Activated CD8-positive, alpha-beta T cell treated with anti-CD3 and anti-CD28 coated beads for 36 hours (primary cell): ENCODE measurements at regions of chr6 and their contacts with region 1.

Region 1: GRCh38 chr6:24666641-24667377 is at the starts of genes ACOT13 and TDP2:
- DNase-seq: peak; percentile 96
- ATAC-seq: peak; percentile 95
- H3K4me3 Mint-ChIP-seq: peak within 1 kb of the TSS; percentile 91
- H3K27ac Mint-ChIP-seq: peak within 1 kb of the TSS; percentile 99
- H3K4me1 Mint-ChIP-seq: peaks cover 33% of the 10 kb centered on the region
- H3K27me3 Mint-ChIP-seq: no peaks in the 10 kb centered on the region
- CTCF ChIP-seq: peak; percentile 70
- total RNA-seq, gene ACOT13: 28.9 to 33.6 TPM
- total RNA-seq, gene TDP2: 37.4 to 39.8 TPM

Region 2: DNA sequence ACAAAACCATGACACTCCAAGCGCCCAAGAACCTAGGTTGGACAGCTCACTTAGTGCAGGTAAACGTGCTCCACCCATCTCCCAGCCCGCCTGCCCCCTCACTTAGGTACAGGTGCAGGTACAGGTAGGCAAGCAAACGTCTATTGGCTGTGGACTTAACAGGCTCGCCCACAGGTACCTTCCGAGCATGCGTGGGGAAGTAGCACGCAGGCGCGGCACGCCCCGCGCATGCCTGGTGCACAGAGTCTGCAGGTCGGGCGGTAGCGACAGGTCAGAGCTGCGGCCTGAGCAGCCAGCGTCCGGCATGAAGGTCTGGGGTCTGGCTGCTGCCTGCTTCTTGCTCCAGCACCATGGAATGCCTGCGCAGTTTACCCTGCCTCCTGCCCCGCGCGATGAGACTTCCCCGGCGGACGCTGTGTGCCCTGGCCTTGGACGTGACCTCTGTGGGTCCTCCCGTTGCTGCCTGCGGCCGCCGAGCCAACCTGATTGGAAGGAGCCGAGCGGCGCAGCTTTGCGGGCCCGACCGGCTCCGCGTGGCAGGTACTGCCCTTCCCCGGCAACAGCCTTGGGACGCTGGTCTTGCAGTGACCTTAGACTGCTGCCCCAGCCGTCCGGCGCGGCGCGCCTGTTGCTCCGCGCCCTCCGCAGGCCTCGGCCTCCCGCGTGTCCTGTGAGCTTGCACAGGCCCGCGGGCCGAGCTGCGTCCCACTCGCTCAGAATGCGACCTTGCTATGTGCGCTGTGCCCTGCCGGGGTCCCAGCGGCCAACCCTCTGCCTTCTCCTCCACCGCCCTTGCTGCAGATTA is 263.9 kb before region 1 on chr6 and contains the start of gene MRS2:
- CTCF ChIA-PET with region 1: no interaction called
- POLR2A ChIA-PET with region 1: no interaction called
- intact Hi-C with region 1: no loop called
- DNase-seq: peak; percentile 81
- ATAC-seq: peak; percentile 93
- H3K4me3 Mint-ChIP-seq: peak within 1 kb of the TSS; percentile 97
- H3K27ac Mint-ChIP-seq: peak within 1 kb of the TSS; percentile 71
- H3K4me1 Mint-ChIP-seq: peaks cover 25% of the 10 kb centered on the region
- H3K27me3 Mint-ChIP-seq: peaks cover 15% of the 10 kb centered on the region
- CTCF ChIP-seq: no peak
- total RNA-seq, gene MRS2: 24.7 to 26.3 TPM

Region 3: GRCh38 chr6:24655215-24655614 is 11.6 kb before region 1 on chr6:
- CTCF ChIA-PET with region 1: interaction called, 5 read pairs
- POLR2A ChIA-PET with region 1: interaction called, 15 read pairs
- intact Hi-C with region 1: no loop called
- DNase-seq: no peak
- ATAC-seq: peak; percentile 47
- H3K4me3 Mint-ChIP-seq: no peak overlapping the region
- H3K27ac Mint-ChIP-seq: peak overlapping the region; percentile 75
- H3K4me1 Mint-ChIP-seq: peaks cover 21% of the 10 kb centered on the region
- H3K27me3 Mint-ChIP-seq: no peaks in the 10 kb centered on the region
- CTCF ChIP-seq: no peak